ENCODE measurements at regions of chr15 and their contacts with region 1.

Region 1: GRCh38 chr15:68277603-68278344 is at the start of gene FEM1B:
- DNase-seq: peak; percentile 85
- H3K4me3 Mint-ChIP-seq: peak within 1 kb of the TSS; percentile 100
- H3K27ac Mint-ChIP-seq: peak within 1 kb of the TSS; percentile 96
- H3K4me1 Mint-ChIP-seq: peaks cover 47% of the 10 kb centered on the region
- H3K27me3 Mint-ChIP-seq: no peaks in the 10 kb centered on the region
- total RNA-seq, gene FEM1B: 45.1 and 50.4 TPM in 2 replicates

Region 2: DNA sequence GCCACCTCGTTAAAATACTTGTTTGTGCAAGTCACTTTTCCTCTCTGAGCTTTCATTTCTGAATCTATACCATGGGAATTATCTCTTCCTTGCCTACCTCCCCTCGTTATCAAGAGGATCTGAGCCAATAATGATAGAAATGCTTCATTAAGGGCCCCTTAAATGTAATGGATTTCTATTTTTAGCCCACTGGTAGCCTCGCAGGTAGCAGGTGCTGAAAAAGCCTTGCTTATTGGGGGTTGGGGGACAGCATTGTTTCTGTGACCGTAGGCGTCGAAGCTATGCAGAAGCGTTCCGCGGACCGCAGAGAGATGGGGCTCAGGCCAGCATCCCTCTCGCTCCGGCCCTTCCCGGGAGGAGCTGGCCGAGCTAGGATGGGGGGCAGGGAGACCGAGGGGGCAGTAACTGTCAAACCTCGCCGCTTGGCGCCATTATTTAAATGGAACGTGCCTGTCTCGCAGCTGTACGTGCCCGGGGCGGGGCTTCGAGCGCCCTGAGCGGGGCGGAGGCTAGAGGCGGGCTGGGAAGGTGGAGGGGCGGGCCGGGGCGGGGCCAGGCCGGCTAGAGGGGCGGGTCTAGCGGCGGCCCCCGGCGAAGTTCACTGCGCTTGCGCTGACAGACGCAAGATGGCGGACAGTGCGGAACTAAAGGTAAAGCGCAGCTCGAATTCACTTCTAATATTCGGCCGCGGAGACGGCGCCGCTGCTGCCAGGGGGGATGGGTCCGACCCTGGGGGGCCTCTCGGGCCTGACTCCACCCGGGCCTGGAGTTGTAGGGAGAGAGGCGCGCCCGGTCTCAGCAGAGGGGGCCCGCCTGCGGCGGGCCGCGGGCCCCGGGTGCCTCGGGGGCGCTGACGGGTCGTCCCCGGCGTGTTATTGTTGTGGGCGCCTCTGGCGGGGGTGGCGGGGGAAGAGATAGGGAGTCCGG is 223.8 kb before region 1 on chr15 and contains the start of gene PIAS1:
- intact Hi-C with region 1: loop called (anchors 5 kb)
- DNase-seq: peak; percentile 89
- H3K4me3 Mint-ChIP-seq: peak within 1 kb of the TSS; percentile 99
- H3K27ac Mint-ChIP-seq: peak within 1 kb of the TSS; percentile 95
- H3K4me1 Mint-ChIP-seq: peaks cover 40% of the 10 kb centered on the region
- H3K27me3 Mint-ChIP-seq: peaks cover 2% of the 10 kb centered on the region
- total RNA-seq, gene PIAS1: 30.3 and 34.4 TPM in 2 replicates

Region 3: DNA sequence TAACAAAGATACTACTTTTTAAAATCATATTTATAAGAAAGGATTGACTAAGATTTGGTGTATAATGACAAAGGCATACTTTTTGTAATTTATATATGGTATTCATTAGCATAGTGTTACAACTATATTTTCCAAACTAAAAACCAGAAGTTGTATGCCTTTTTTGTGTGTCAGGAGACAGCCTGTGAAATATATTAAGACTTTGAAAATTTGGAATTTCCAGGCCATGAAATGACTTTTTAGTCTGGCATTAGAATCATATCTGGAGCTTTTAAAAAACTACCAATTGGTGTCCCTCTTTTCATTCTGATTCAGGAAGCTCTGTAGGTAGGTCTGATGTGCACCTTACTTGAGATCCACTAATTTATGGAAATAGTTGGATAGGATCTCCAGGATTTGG is 114.6 kb before region 1 on chr15:
- intact Hi-C with region 1: no loop called
- DNase-seq: no peak
- H3K4me3 Mint-ChIP-seq: no peak overlapping the region
- H3K27ac Mint-ChIP-seq: no peak overlapping the region
- H3K4me1 Mint-ChIP-seq: no peaks in the 10 kb centered on the region
- H3K27me3 Mint-ChIP-seq: no peaks in the 10 kb centered on the region

Region 4: DNA sequence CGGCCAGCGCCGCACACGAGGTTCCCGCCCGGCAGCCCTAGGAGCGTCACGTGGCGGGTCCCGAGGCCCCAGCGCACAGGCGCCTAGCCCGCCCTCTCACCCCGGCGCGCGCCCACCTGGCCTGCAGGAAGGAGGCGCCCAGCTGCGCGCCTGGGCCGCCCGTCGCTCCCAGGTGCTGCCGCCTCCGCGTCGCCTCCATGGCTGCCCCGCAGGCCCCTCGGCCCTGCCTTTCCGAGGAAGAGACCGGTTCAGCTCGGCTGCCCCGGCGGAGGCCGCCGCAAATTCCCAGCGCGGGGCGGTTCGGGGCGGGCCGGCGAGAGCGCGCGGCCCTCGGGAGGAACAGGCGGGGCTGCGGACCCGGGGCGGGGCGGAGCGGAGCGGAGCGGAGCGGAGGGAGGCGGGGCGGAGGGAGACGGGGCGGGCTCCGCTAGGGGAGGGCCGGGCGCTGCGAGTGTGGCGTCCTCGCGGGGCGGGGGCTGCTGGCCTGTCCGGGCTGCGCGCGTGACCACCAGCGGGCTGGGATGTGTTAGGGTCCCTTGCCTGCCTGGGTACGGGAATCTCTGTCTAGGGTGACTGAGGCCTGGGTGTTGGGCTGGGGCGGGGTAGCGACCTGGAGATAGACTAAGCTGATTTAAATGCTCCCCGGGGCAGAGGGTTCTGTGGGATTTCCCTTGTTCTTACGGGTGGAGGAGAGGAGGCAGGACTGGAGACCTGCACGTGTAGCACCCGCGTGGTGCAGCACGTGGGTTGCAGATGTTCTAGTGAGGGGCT is 48.2 kb before region 1 on chr15 and contains the start of gene CLN6:
- intact Hi-C with region 1: loop called (anchors 5 kb)
- DNase-seq: peak; percentile 81
- H3K4me3 Mint-ChIP-seq: peak within 1 kb of the TSS; percentile 94
- H3K27ac Mint-ChIP-seq: peak within 1 kb of the TSS; percentile 78
- H3K4me1 Mint-ChIP-seq: peaks cover 33% of the 10 kb centered on the region
- H3K27me3 Mint-ChIP-seq: no peaks in the 10 kb centered on the region
- total RNA-seq, gene CLN6: 82.4 and 84.9 TPM in 2 replicates

Region 5: DNA sequence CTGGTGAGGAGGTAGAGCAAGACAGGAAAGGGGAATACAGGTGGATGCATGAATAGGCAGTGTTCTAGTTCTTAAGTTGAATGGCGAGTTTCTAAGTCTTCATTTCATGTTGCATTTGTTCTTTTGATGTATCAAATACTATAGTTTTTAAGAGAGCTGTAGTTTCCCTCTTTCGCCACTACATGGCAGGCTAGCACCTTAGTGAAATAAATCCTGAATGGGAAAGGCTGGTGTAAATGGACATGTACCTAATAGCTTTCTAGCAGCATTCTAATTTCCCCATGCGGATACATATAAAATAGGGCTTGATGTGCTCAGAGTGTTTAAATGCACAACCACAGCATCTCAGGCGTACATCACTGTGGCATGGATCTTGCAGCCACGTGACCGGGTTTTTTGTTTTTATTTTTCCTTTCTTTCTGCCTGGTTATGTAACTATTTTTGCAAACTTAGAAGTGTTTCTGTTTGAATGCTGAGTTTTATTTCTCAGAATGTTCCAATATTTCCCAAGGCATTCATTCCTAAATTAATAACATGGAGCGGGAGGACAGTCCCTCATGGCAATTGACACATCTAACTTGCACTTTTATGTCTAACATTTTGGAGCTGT is 24.7 kb before region 1 on chr15:
- intact Hi-C with region 1: loop called (anchors 2 kb)
- DNase-seq: no peak
- H3K4me3 Mint-ChIP-seq: no peak overlapping the region
- H3K27ac Mint-ChIP-seq: no peak overlapping the region
- H3K4me1 Mint-ChIP-seq: peaks cover 2% of the 10 kb centered on the region
- H3K27me3 Mint-ChIP-seq: peaks cover 19% of the 10 kb centered on the region

Region 6: DNA sequence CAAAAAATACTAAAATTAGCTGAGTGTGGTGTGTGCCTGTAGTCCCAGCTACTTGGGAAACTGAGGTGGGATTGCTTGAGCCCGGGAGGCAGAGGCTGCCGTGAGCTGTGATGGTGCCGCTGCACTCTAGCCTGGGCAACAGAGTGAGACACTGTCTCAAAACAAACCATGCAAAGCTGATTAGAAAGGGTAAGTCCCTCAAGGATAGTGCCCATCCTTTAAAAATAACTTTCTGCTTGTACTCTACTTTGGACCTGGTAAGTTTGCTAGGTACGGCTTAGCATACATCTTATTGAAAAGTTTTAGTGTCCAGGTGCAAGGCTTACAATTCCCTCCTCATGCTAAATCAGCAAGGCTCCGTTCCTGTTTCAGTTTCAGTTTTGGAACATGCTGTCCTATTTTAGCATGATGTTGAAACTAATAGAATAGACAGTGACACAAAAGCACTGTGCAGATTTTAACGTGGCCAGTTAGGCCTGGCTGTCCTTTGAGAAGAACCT is 21.2 kb after region 1 on chr15:
- intact Hi-C with region 1: loop called (anchors 2 kb)
- DNase-seq: no peak
- H3K4me3 Mint-ChIP-seq: peak overlapping the region; percentile 58
- H3K27ac Mint-ChIP-seq: peak overlapping the region; percentile 67
- H3K4me1 Mint-ChIP-seq: peaks cover 20% of the 10 kb centered on the region
- H3K27me3 Mint-ChIP-seq: no peaks in the 10 kb centered on the region

Region 7: GRCh38 chr15:68503791-68504680 is 226.3 kb after region 1 on chr15:
- intact Hi-C with region 1: no loop called
- DNase-seq: no peak
- H3K4me3 Mint-ChIP-seq: no peak overlapping the region
- H3K27ac Mint-ChIP-seq: no peak overlapping the region
- H3K4me1 Mint-ChIP-seq: peaks cover 4% of the 10 kb centered on the region
- H3K27me3 Mint-ChIP-seq: peaks cover 14% of the 10 kb centered on the region

Region 8: GRCh38 chr15:68820295-68821189 is 542.8 kb after region 1 on chr15 and contains the start of gene ANP32A:
- intact Hi-C with region 1: loop called (anchors 5 kb)
- DNase-seq: peak; percentile 93
- H3K4me3 Mint-ChIP-seq: peak within 1 kb of the TSS; percentile 100
- H3K27ac Mint-ChIP-seq: peak within 1 kb of the TSS; percentile 100
- H3K4me1 Mint-ChIP-seq: peaks cover 30% of the 10 kb centered on the region
- H3K27me3 Mint-ChIP-seq: no peaks in the 10 kb centered on the region
- total RNA-seq, gene ANP32A: 259 and 265 TPM in 2 replicates